CD14-positive monocyte (primary cell): ENCODE measurements at regions of chr11 and their contacts with region 1.

Region 1: GRCh38 chr11:2885676-2886081 is at the start of gene CDKN1C:
- DNase-seq: peak; percentile 60 to 75 (median 74)
- H3K4me3 ChIP-seq: peak within 1 kb of the TSS; percentile 59 to 89 (median 69)
- H3K4me3 Mint-ChIP-seq: peak within 1 kb of the TSS; percentile 92 to 97
- H3K27ac ChIP-seq: no peak within 1 kb of the TSS
- H3K27ac Mint-ChIP-seq: peak within 1 kb of the TSS in 5 of 7 donors; percentile 24 to 82 (median 79)
- H3K4me1 ChIP-seq: peaks cover 14 to 28% of the 10 kb centered on the region in 2 donors
- H3K4me1 Mint-ChIP-seq: peaks cover 16% of the 10 kb centered on the region
- H3K27me3 ChIP-seq: peaks cover 11 to 48% of the 10 kb centered on the region in 2 donors
- H3K27me3 Mint-ChIP-seq: peaks cover 37 to 66% (median 43%) of the 10 kb centered on the region in 3 donors
- CTCF ChIP-seq: no peak
- polyA plus RNA-seq, gene CDKN1C: 3.2 to 36.4 (median 4.7) TPM

Region 2: GRCh38 chr11:2305140-2305840 is 580.4 kb before region 1 on chr11:
- intact Hi-C with region 1: loop called in 1 of 2 experiments (anchors 10 kb)
- DNase-seq: peak; percentile 71 to 80 (median 76)
- H3K4me3 ChIP-seq: peak overlapping the region; percentile 9 to 86 (median 19)
- H3K4me3 Mint-ChIP-seq: peak overlapping the region; percentile 68 to 96
- H3K27ac ChIP-seq: no peak overlapping the region
- H3K27ac Mint-ChIP-seq: peak overlapping the region in 2 of 7 donors; percentile 65 to 91
- H3K4me1 ChIP-seq: peaks cover 58 to 71% of the 10 kb centered on the region in 2 donors
- H3K4me1 Mint-ChIP-seq: peaks cover 56% of the 10 kb centered on the region
- H3K27me3 ChIP-seq: no peaks in the 10 kb centered on the region
- H3K27me3 Mint-ChIP-seq: peaks cover 0 to 2% (median 0%) of the 10 kb centered on the region in 3 donors
- CTCF ChIP-seq: peak; percentile 90

Region 3: GRCh38 chr11:2428322-2428795 is 457.3 kb before region 1 on chr11:
- intact Hi-C with region 1: loop called in 1 of 2 experiments (anchors 2 kb)
- DNase-seq: peak; percentile 72 to 80 (median 74)
- H3K4me3 ChIP-seq: no peak overlapping the region
- H3K4me3 Mint-ChIP-seq: no peak overlapping the region
- H3K27ac ChIP-seq: no peak overlapping the region
- H3K27ac Mint-ChIP-seq: no peak overlapping the region
- H3K4me1 ChIP-seq: no peaks in the 10 kb centered on the region
- H3K4me1 Mint-ChIP-seq: no peaks in the 10 kb centered on the region
- H3K27me3 ChIP-seq: no peaks in the 10 kb centered on the region
- H3K27me3 Mint-ChIP-seq: peaks cover 0 to 8% (median 7%) of the 10 kb centered on the region in 3 donors
- CTCF ChIP-seq: peak; percentile 91

Region 4: GRCh38 chr11:2444821-2445745 is 440.6 kb before region 1 on chr11 and contains the start of gene KCNQ1:
- intact Hi-C with region 1: loop called in 1 of 2 experiments (anchors 2 kb)
- DNase-seq: peak; percentile 49 to 73 (median 60)
- H3K4me3 ChIP-seq: peak within 1 kb of the TSS; percentile 74 to 88 (median 82)
- H3K4me3 Mint-ChIP-seq: peak within 1 kb of the TSS; percentile 93 to 98
- H3K27ac ChIP-seq: peak within 1 kb of the TSS; percentile 80 to 88
- H3K27ac Mint-ChIP-seq: peak within 1 kb of the TSS; percentile 74 to 89 (median 86)
- H3K4me1 ChIP-seq: peaks cover 49 to 57% of the 10 kb centered on the region in 2 donors
- H3K4me1 Mint-ChIP-seq: peaks cover 43% of the 10 kb centered on the region
- H3K27me3 ChIP-seq: peaks cover 0 to 19% of the 10 kb centered on the region in 2 donors
- H3K27me3 Mint-ChIP-seq: peaks cover 13 to 25% (median 16%) of the 10 kb centered on the region in 3 donors
- CTCF ChIP-seq: no peak
- polyA plus RNA-seq, gene KCNQ1: 14.9 to 31.8 (median 21.6) TPM

Region 5: DNA sequence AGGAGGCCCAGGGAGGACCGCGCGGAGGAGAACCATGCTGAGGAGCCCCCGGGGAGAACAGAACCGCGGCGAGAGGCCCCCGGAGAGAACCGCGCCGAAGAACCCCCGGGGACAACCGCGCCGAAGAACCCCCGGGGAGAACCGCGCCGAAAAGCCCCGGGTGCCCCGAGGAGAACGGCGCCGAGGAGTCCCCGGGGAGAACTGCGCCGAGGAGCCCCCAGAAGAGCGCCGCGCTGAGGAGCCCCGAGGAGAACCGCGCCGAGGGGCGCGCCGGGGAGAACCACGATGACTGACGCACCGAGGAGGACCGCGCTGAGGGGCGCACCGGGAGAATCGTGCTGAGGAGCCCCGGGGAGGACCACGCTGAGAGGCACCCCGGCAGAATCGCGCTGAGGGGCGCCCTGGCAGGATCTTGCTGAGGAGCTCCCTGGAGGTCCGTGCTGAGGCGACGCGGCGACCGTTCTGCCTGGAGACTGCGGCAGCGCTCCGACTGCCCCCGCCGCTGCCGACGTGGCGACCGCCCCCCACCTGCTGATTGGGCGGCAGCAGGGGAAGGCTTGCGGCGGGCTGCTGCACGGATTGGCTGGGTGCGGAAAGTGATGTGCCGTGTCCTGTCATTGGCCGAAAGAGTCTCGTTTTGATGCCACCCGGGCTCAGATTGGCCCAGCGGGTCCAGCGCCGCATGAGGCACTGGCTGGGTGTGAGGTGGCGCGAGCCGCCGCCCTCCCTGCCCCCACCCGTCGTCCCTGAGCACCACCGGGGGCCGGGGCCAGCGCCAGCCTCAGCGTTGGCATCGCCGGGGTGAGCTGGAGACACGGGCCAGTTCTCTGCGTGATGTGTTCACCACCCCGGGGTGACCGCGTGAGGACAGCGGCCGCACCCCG is 185.9 kb before region 1 on chr11 and contains the start of gene KCNQ1OT1:
- intact Hi-C with region 1: loop called in 1 of 2 experiments (anchors 10 kb)
- DNase-seq: peak; percentile 80 to 89 (median 88)
- H3K4me3 ChIP-seq: peak within 1 kb of the TSS; percentile 47 to 73 (median 63)
- H3K4me3 Mint-ChIP-seq: peak within 1 kb of the TSS; percentile 85 to 88
- H3K27ac ChIP-seq: peak within 1 kb of the TSS; percentile 7 to 87
- H3K27ac Mint-ChIP-seq: peak within 1 kb of the TSS in 5 of 7 donors; percentile 38 to 80 (median 70)
- H3K4me1 ChIP-seq: peaks cover 23 to 29% of the 10 kb centered on the region in 2 donors
- H3K4me1 Mint-ChIP-seq: peaks cover 32% of the 10 kb centered on the region
- H3K27me3 ChIP-seq: no peaks in the 10 kb centered on the region
- H3K27me3 Mint-ChIP-seq: peaks cover 5 to 9% (median 7%) of the 10 kb centered on the region in 3 donors
- CTCF ChIP-seq: no peak
- polyA plus RNA-seq, gene KCNQ1OT1: 0.01 to 0.04 (median 0.03) TPM